Mammary epithelial cell (primary cell): ENCODE measurements at regions of chr14 and their contacts with region 1.

Region 1: GRCh38 chr14:73785873-73786695 is 65.5 kb upstream of the PTGR2 start:
- DNase-seq: peak; percentile 84
- H3K4me3 ChIP-seq: peak overlapping the region; percentile 61 to 71 (median 63)
- H3K27ac ChIP-seq: peak overlapping the region; percentile 95
- H3K4me1 ChIP-seq: peaks cover 62% of the 10 kb centered on the region
- H3K27me3 ChIP-seq: no peaks in the 10 kb centered on the region
- CTCF ChIP-seq: peak; percentile 18 to 38

Region 2: GRCh38 chr14:73713803-73714655 is 72.1 kb before region 1 on chr14 and contains the start of gene PNMA1:
- CTCF ChIA-PET with region 1: no interaction called
- dilution Hi-C with region 1: no loop called
- in situ Hi-C with region 1: no loop called
- intact Hi-C with region 1: no loop called
- DNase-seq: peak; percentile 71
- H3K4me3 ChIP-seq: peak within 1 kb of the TSS; percentile 62 to 79 (median 68)
- H3K27ac ChIP-seq: peak within 1 kb of the TSS; percentile 54
- H3K4me1 ChIP-seq: peaks cover 14% of the 10 kb centered on the region
- H3K27me3 ChIP-seq: no peaks in the 10 kb centered on the region
- CTCF ChIP-seq: no peak
- total RNA-seq, gene PNMA1: 15.7 to 30.5 TPM

Region 3: DNA sequence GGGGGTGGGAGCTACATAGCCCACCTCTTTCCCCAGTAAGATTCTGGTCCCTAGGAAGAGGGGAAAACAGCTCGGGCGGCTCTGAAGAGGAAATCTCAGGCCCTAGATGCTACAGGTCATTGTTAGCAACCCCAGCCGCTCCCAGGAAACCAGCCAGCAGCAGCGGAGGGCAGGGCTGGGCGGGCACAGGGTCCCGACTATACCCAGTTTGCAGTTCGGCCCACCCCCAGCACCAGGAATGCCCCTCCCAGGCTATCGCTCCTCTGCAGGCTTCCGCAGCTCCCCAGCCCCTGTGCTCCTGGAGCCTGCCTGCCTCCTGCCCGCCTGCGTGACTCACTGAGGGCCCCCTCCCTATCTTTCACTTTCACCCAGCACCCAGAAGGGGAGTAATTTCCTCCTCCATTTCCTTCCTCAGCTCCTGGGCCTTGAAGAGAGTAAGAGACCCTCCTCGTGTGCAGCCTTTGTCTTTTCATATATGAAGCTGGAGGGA is 44.7 kb before region 1 on chr14:
- CTCF ChIA-PET with region 1: interaction called, 9 read pairs
- dilution Hi-C with region 1: no loop called
- in situ Hi-C with region 1: no loop called
- intact Hi-C with region 1: loop called (anchors 5 kb)
- DNase-seq: peak; percentile 72
- H3K4me3 ChIP-seq: peak overlapping the region in 1 of 3 experiments; percentile 14
- H3K27ac ChIP-seq: peak overlapping the region; percentile 70
- H3K4me1 ChIP-seq: peaks cover 75% of the 10 kb centered on the region
- H3K27me3 ChIP-seq: no peaks in the 10 kb centered on the region
- CTCF ChIP-seq: no peak

Region 4: GRCh38 chr14:73802431-73803188 is 16.5 kb after region 1 on chr14:
- CTCF ChIA-PET with region 1: no interaction called
- dilution Hi-C with region 1: no loop called
- in situ Hi-C with region 1: no loop called
- intact Hi-C with region 1: loop called (anchors 2 kb)
- DNase-seq: peak; percentile 89
- H3K4me3 ChIP-seq: no peak overlapping the region
- H3K27ac ChIP-seq: peak overlapping the region; percentile 56
- H3K4me1 ChIP-seq: peaks cover 24% of the 10 kb centered on the region
- H3K27me3 ChIP-seq: no peaks in the 10 kb centered on the region
- CTCF ChIP-seq: no peak

Region 5: GRCh38 chr14:73851644-73852382 is 65.7 kb after region 1 on chr14 and contains the start of gene PTGR2:
- CTCF ChIA-PET with region 1: no interaction called
- dilution Hi-C with region 1: loop called (anchors 5 kb)
- in situ Hi-C with region 1: no loop called
- intact Hi-C with region 1: loop called (anchors 2 kb)
- DNase-seq: peak; percentile 92
- H3K4me3 ChIP-seq: peak within 1 kb of the TSS; percentile 49 to 95 (median 68)
- H3K27ac ChIP-seq: peak within 1 kb of the TSS; percentile 92
- H3K4me1 ChIP-seq: peaks cover 20% of the 10 kb centered on the region
- H3K27me3 ChIP-seq: no peaks in the 10 kb centered on the region
- CTCF ChIP-seq: peak in 1 of 2 donors; percentile 16
- total RNA-seq, gene PTGR2: 8.2 to 9.5 TPM